ENCODE measurements at regions of chr10 and their contacts with region 1.

Region 1: DNA sequence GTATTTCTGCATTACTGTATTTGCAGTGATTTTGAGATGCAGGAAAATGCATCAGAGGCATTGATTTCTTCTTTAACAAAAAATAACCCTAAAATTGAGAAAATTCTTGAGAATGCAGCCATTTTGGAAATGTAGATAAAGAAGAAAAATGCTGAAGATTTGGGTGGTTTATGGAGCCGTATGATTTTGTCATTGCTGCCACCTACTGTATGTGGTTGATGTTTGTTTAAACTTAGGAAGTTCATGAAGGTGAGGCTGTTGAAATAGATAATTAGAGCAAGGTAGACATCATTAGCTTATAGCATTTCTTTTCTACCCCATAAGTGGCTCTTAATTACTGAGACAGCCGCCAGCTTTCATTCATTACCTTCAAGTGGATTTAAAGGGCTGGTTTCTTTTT is 92.1 kb upstream of the SAMD8 start:
- DNase-seq: peak in 2 of 9 experiments; percentile 55 to 67
- ATAC-seq: peak; percentile 58
- H3K4me3 ChIP-seq: no peak overlapping the region
- H3K4me3 Mint-ChIP-seq: no peak overlapping the region
- H3K27ac ChIP-seq: no peak overlapping the region
- H3K27ac Mint-ChIP-seq: no peak overlapping the region
- H3K4me1 ChIP-seq: peaks cover 15% of the 10 kb centered on the region
- H3K4me1 Mint-ChIP-seq: peaks cover 27% of the 10 kb centered on the region
- H3K27me3 ChIP-seq: no peaks in the 10 kb centered on the region
- H3K27me3 Mint-ChIP-seq: no peaks in the 10 kb centered on the region
- CTCF ChIP-seq: peak; percentile 44

Region 2: DNA sequence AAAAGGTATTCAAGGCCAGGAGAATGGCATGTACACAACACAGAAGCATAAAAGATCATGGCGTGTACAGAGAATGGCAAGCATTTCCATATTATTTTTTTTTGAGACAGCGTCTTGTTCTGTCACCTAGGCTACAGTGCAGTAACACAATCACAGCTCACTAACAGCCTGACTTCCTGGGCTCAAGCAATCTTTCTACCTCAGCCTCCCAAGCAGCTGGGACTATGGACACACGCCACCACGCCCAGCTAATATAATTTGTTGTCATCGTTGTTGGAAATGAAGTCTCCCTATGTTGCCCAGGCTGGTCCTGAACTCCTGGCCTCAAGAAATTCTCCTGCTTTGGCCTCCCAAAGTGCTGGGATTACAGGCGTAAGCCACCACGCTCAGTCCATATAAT is 1632.8 kb before region 1 on chr10:
- CTCF ChIA-PET with region 1: no interaction called
- POLR2A ChIA-PET with region 1: no interaction called
- intact Hi-C with region 1: no loop called
- DNase-seq: no peak
- ATAC-seq: no peak
- H3K4me3 ChIP-seq: no peak overlapping the region
- H3K4me3 Mint-ChIP-seq: no peak overlapping the region
- H3K27ac ChIP-seq: no peak overlapping the region
- H3K27ac Mint-ChIP-seq: no peak overlapping the region
- H3K4me1 ChIP-seq: no peaks in the 10 kb centered on the region
- H3K4me1 Mint-ChIP-seq: no peaks in the 10 kb centered on the region
- H3K27me3 ChIP-seq: no peaks in the 10 kb centered on the region
- H3K27me3 Mint-ChIP-seq: no peaks in the 10 kb centered on the region
- CTCF ChIP-seq: no peak

Region 3: DNA sequence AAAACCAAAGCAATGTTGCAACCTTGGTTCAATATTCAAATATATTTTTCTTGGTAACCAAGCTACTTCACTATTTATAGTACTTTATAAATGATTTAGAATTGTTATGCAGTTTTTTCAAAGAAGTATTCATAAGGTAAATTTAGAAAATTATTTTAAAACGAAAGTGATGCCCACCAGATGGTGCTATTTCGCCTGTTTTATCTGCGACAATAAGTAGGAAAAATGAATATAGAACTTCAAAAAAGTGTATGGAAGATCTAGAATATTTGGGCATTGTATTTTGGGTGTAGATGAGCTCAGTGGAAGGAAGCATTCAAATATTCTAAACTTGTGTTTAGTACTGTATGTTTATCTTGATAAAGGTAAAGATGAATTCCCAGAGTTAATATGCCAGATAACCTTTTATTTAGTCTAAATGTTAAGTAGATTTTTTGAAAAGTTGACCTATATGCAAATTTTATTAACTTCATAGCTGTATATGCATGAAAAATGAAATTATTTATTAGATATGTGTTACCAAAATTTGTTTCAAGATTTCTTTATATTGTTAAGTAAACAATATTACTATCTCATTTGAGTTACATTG is 775.2 kb before region 1 on chr10:
- CTCF ChIA-PET with region 1: interaction called, 14 read pairs
- POLR2A ChIA-PET with region 1: no interaction called
- intact Hi-C with region 1: loop called in 1 of 2 experiments (anchors 2 kb)
- DNase-seq: peak in 3 of 9 experiments; percentile 26 to 68 (median 60)
- ATAC-seq: no peak
- H3K4me3 ChIP-seq: no peak overlapping the region
- H3K4me3 Mint-ChIP-seq: no peak overlapping the region
- H3K27ac ChIP-seq: no peak overlapping the region
- H3K27ac Mint-ChIP-seq: no peak overlapping the region
- H3K4me1 ChIP-seq: no peaks in the 10 kb centered on the region
- H3K4me1 Mint-ChIP-seq: peaks cover 2% of the 10 kb centered on the region
- H3K27me3 ChIP-seq: no peaks in the 10 kb centered on the region
- H3K27me3 Mint-ChIP-seq: no peaks in the 10 kb centered on the region
- CTCF ChIP-seq: peak; percentile 73

Region 4: DNA sequence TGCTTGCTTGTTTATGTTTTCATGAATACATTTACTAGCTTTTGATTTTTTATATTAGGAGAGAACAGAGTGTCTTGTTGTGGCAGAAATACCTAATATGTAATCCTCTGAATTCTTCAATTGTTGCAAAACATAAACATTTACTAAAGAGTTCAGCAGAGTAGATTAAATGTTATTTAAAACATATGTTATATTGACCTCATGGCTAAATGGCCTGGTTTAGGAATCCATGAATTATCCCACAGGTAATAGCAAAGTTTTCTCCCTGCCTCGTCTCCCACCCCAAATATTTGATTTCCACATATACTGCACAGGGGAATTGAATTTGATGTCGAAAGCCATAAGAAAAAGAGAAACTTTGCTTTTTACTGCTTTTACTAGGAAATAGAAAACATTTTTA is 756.5 kb before region 1 on chr10:
- CTCF ChIA-PET with region 1: interaction called, 6 read pairs
- POLR2A ChIA-PET with region 1: no interaction called
- intact Hi-C with region 1: loop called (anchors 1 kb)
- DNase-seq: no peak
- ATAC-seq: no peak
- H3K4me3 ChIP-seq: no peak overlapping the region
- H3K4me3 Mint-ChIP-seq: no peak overlapping the region
- H3K27ac ChIP-seq: no peak overlapping the region
- H3K27ac Mint-ChIP-seq: peak overlapping the region; percentile 58
- H3K4me1 ChIP-seq: no peaks in the 10 kb centered on the region
- H3K4me1 Mint-ChIP-seq: peaks cover 7% of the 10 kb centered on the region
- H3K27me3 ChIP-seq: no peaks in the 10 kb centered on the region
- H3K27me3 Mint-ChIP-seq: no peaks in the 10 kb centered on the region
- CTCF ChIP-seq: no peak

Region 5: GRCh38 chr10:74419958-74420375 is 599.4 kb before region 1 on chr10:
- CTCF ChIA-PET with region 1: interaction called, 16 read pairs
- POLR2A ChIA-PET with region 1: no interaction called
- intact Hi-C with region 1: loop called in 1 of 2 experiments (anchors 2 kb)
- DNase-seq: peak in 7 of 9 experiments; percentile 1 to 54 (median 36)
- ATAC-seq: peak; percentile 58
- H3K4me3 ChIP-seq: no peak overlapping the region
- H3K4me3 Mint-ChIP-seq: no peak overlapping the region
- H3K27ac ChIP-seq: no peak overlapping the region
- H3K27ac Mint-ChIP-seq: no peak overlapping the region
- H3K4me1 ChIP-seq: no peaks in the 10 kb centered on the region
- H3K4me1 Mint-ChIP-seq: peaks cover 5% of the 10 kb centered on the region
- H3K27me3 ChIP-seq: no peaks in the 10 kb centered on the region
- H3K27me3 Mint-ChIP-seq: no peaks in the 10 kb centered on the region
- CTCF ChIP-seq: peak; percentile 55

Region 6: DNA sequence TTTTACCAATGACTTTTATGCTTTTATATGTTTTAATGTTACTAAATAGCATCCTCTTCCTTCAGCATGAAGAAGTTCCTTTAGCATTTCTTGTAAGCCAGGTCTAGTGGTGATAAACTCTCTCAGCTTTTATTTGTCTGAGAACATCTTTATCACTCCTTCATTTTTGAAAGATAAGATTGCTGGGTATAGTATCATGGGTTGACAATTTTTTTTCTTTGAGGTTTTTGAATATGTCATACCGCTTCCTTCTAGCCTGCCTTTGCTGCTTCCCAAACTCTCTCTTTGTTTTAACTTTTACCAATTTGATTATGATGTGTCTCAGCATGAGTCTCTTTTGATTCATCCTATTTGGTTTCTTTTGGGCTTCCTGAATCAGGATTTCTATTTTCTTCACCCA is 301.2 kb before region 1 on chr10:
- CTCF ChIA-PET with region 1: no interaction called
- POLR2A ChIA-PET with region 1: no interaction called
- intact Hi-C with region 1: no loop called
- DNase-seq: no peak
- ATAC-seq: no peak
- H3K4me3 ChIP-seq: no peak overlapping the region
- H3K4me3 Mint-ChIP-seq: no peak overlapping the region
- H3K27ac ChIP-seq: no peak overlapping the region
- H3K27ac Mint-ChIP-seq: peak overlapping the region; percentile 32
- H3K4me1 ChIP-seq: no peaks in the 10 kb centered on the region
- H3K4me1 Mint-ChIP-seq: no peaks in the 10 kb centered on the region
- H3K27me3 ChIP-seq: no peaks in the 10 kb centered on the region
- H3K27me3 Mint-ChIP-seq: no peaks in the 10 kb centered on the region
- CTCF ChIP-seq: no peak

Region 7: DNA sequence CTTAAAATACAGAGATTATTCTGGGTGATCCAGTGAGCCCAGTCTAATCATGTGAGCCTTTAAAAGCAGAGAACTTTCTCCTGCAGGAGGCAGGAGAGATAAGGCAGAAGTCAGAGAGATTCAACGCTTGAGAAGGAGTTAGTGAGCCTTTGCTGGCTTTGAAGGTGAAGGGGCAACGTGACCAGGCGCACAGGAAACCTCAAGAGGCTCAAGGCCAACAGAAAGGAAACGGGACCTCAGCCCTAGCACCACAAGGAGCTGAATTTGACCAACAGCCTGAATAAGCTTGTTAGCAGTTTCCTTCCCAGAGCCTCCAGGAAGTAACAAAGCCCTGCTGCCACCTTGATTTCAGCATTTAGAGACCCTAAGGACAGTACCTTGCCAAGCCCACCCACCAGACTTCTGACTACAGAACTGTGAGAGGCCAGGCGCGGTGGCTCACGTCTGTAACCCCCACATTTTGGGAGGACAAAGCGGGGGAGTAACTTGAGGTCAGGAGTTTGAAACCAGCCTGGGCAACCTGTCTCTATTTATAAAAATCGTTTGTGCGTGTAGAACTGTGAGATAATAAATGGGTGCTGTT is 280.3 kb before region 1 on chr10:
- CTCF ChIA-PET with region 1: no interaction called
- POLR2A ChIA-PET with region 1: no interaction called
- intact Hi-C with region 1: loop called (anchors 2 to 5 kb)
- DNase-seq: peak in 6 of 9 experiments; percentile 2 to 68 (median 44)
- ATAC-seq: peak; percentile 71
- H3K4me3 ChIP-seq: no peak overlapping the region
- H3K4me3 Mint-ChIP-seq: peak overlapping the region; percentile 56
- H3K27ac ChIP-seq: peak overlapping the region in 1 of 2 experiments; percentile 59
- H3K27ac Mint-ChIP-seq: peak overlapping the region; percentile 86
- H3K4me1 ChIP-seq: peaks cover 19% of the 10 kb centered on the region
- H3K4me1 Mint-ChIP-seq: peaks cover 26% of the 10 kb centered on the region
- H3K27me3 ChIP-seq: no peaks in the 10 kb centered on the region
- H3K27me3 Mint-ChIP-seq: no peaks in the 10 kb centered on the region
- CTCF ChIP-seq: peak; percentile 33

Region 8: DNA sequence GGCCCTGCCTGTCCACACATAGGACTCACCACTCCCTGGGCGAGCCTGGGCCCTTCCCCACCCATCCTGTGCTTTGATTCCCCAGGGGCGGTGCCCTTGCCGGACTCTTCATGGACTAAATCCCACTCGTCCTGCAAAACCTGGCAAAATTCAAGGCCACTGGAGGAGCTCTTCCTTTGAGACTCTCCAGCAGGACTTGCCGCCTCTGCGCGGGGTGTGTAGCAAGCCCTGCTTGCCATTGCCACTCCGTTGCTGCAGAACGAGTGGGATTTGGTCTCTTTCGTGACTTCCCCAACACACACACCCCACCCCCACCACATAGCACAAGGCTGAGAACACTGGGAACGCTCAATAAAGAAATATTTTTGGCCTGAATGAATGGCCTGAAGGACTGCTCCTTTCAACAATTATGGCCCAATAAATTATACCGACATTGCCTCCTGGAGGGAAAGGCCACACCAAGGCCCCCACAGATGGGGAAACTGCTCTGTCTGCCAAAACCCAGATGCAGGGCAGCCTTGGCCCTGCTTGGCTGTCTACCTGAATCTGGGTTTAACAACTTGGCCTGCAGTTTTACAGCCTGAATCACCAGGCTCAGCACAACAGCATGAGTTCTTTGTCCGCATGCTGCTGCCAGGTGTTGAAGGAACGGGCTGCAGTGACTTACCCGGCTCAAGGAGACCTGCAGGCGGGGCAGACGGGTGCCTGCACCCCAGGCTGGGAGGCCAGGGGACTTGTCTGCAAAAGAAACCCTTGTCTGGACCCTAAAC is 265.7 kb before region 1 on chr10:
- CTCF ChIA-PET with region 1: interaction called, 7 read pairs
- POLR2A ChIA-PET with region 1: no interaction called
- intact Hi-C with region 1: loop called in 1 of 2 experiments (anchors 5 kb)
- DNase-seq: no peak
- ATAC-seq: no peak
- H3K4me3 ChIP-seq: no peak overlapping the region
- H3K4me3 Mint-ChIP-seq: no peak overlapping the region
- H3K27ac ChIP-seq: no peak overlapping the region
- H3K27ac Mint-ChIP-seq: no peak overlapping the region
- H3K4me1 ChIP-seq: peaks cover 11% of the 10 kb centered on the region
- H3K4me1 Mint-ChIP-seq: peaks cover 7% of the 10 kb centered on the region
- H3K27me3 ChIP-seq: no peaks in the 10 kb centered on the region
- H3K27me3 Mint-ChIP-seq: no peaks in the 10 kb centered on the region
- CTCF ChIP-seq: no peak

Measured in CD8-positive, alpha-beta T cell (primary cell).